Heart right ventricle (tissue), 16 donors: ENCODE measurements at regions of chr4 and their contacts with region 1.

Region 1: GRCh38 chr4:141229408-141230101 is 8.9 kb downstream of the ZNF330 start:
- DNase-seq: no peak
- ATAC-seq: peak in 1 of 8 donors; percentile 57
- H3K4me3 ChIP-seq: no peak overlapping the region
- H3K27ac ChIP-seq: no peak overlapping the region
- H3K4me1 ChIP-seq: peaks cover 0 to 20% (median 3%) of the 10 kb centered on the region in 9 donors
- H3K27me3 ChIP-seq: no peaks in the 10 kb centered on the region
- CTCF ChIP-seq: no peak

Region 2: GRCh38 chr4:141283563-141283962 is 54.0 kb after region 1 on chr4:
- intact Hi-C with region 1: loop called in 1 of 10 experiments (anchors 10 kb)
- DNase-seq: no peak
- ATAC-seq: no peak
- H3K4me3 ChIP-seq: no peak overlapping the region
- H3K27ac ChIP-seq: no peak overlapping the region
- H3K4me1 ChIP-seq: no peaks in the 10 kb centered on the region
- H3K27me3 ChIP-seq: no peaks in the 10 kb centered on the region
- CTCF ChIP-seq: no peak